GM12878 (cell line): ENCODE measurements at regions of chr12 and their contacts with region 1.

Region 1: GRCh38 chr12:130916251-130916911 is 37.3 kb upstream of the ADGRD1 start:
- DNase-seq: peak; percentile 21
- ATAC-seq: peak; percentile 75
- H3K4me3 ChIP-seq: no peak overlapping the region
- H3K27ac ChIP-seq: no peak overlapping the region
- H3K4me1 ChIP-seq: no peaks in the 10 kb centered on the region
- H3K27me3 ChIP-seq: no peaks in the 10 kb centered on the region; a peak in 1 of 4 replicates
- CTCF ChIP-seq: peak; percentile 82 to 91 (median 86)
- EP300 ChIP-seq: no peak
- POLR2A ChIP-seq: no peak
- RAD21 ChIP-seq: peak; percentile 98

Region 2: GRCh38 chr12:131454418-131455217 is 538.2 kb after region 1 on chr12:
- CTCF ChIA-PET with region 1: no interaction called
- POLR2A ChIA-PET with region 1: no interaction called
- RAD21 ChIA-PET with region 1: no interaction called
- SMC1A ChIA-PET with region 1: no interaction called
- in situ Hi-C with region 1: no loop called
- intact Hi-C with region 1: loop called (anchors 5 kb)
- DNase-seq: no peak
- ATAC-seq: peak; percentile 100
- H3K4me3 ChIP-seq: no peak overlapping the region
- H3K27ac ChIP-seq: no peak overlapping the region
- H3K4me1 ChIP-seq: no peaks in the 10 kb centered on the region
- H3K27me3 ChIP-seq: no peaks in the 10 kb centered on the region
- CTCF ChIP-seq: peak; percentile 44 to 79 (median 70)
- EP300 ChIP-seq: no peak
- POLR2A ChIP-seq: no peak
- RAD21 ChIP-seq: peak; percentile 61

Region 3: GRCh38 chr12:132003846-132004245 is 1087.5 kb after region 1 on chr12:
- CTCF ChIA-PET with region 1: no interaction called
- POLR2A ChIA-PET with region 1: no interaction called
- RAD21 ChIA-PET with region 1: no interaction called
- SMC1A ChIA-PET with region 1: no interaction called
- in situ Hi-C with region 1: no loop called
- intact Hi-C with region 1: loop called (anchors 5 kb)
- DNase-seq: no peak
- ATAC-seq: no peak
- H3K4me3 ChIP-seq: no peak overlapping the region
- H3K27ac ChIP-seq: no peak overlapping the region
- H3K4me1 ChIP-seq: no peaks in the 10 kb centered on the region
- H3K27me3 ChIP-seq: no peaks in the 10 kb centered on the region
- CTCF ChIP-seq: no peak
- EP300 ChIP-seq: no peak
- POLR2A ChIP-seq: no peak
- RAD21 ChIP-seq: no peak